Activated CD8-positive, alpha-beta T cell treated with anti-CD3 and anti-CD28 coated beads for 36 hours (primary cell): ENCODE measurements at regions of chr2 and their contacts with region 1.

Region 1: DNA sequence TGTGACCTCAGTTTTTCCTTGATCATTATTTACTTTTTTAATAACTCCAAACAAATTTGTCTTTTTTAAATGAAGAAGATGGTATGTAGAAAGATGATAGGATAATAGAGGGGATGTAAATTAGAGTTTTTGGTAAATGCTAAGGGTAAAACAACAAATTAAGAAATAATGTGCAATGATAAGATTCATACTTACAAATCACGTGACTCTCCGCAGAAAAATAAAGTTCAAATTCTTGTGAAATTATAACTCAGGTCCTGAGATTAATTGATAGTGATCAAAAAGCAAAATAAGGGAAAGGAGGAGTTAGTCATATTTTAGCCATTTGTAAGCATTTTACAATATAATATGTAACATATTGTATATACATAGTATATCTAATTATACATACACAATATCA is 304.1 kb upstream of the KCNH7 start:
- DNase-seq: no peak
- ATAC-seq: no peak
- H3K4me3 Mint-ChIP-seq: no peak overlapping the region
- H3K27ac Mint-ChIP-seq: no peak overlapping the region
- H3K4me1 Mint-ChIP-seq: no peaks in the 10 kb centered on the region
- H3K27me3 Mint-ChIP-seq: no peaks in the 10 kb centered on the region
- CTCF ChIP-seq: no peak

Region 2: DNA sequence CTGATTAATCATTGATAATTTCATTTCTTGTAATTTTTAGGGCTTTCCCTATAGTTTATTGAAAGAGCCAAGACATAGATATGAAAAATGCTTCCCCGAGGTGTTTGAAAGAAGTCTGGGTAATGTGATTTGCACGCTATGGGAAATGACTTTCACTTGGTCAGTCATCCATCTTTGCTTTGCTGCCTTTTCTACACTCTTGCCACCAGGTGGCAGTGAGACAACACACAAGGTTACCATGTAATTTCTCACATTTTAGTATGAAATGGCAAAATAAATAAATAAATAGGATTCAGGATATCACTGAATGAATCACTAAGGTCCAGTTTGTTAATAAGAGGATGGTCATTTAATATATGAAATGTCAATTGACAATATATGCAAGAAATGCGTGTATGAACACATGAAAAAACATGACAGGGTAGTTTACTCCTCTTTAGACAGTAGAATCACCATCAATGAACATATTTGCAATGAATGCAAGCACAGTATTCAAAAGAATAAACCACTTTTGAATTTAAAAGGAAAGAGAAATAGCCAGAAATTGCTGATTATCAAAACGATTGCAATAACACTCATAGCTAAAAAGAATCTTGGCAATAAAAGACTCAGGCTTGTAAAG is 251.8 kb before region 1 on chr2:
- CTCF ChIA-PET with region 1: no interaction called
- POLR2A ChIA-PET with region 1: no interaction called
- intact Hi-C with region 1: loop called (anchors 10 kb)
- DNase-seq: peak; percentile 21
- ATAC-seq: no peak
- H3K4me3 Mint-ChIP-seq: no peak overlapping the region
- H3K27ac Mint-ChIP-seq: no peak overlapping the region
- H3K4me1 Mint-ChIP-seq: no peaks in the 10 kb centered on the region
- H3K27me3 Mint-ChIP-seq: no peaks in the 10 kb centered on the region
- CTCF ChIP-seq: peak; percentile 68

Region 3: DNA sequence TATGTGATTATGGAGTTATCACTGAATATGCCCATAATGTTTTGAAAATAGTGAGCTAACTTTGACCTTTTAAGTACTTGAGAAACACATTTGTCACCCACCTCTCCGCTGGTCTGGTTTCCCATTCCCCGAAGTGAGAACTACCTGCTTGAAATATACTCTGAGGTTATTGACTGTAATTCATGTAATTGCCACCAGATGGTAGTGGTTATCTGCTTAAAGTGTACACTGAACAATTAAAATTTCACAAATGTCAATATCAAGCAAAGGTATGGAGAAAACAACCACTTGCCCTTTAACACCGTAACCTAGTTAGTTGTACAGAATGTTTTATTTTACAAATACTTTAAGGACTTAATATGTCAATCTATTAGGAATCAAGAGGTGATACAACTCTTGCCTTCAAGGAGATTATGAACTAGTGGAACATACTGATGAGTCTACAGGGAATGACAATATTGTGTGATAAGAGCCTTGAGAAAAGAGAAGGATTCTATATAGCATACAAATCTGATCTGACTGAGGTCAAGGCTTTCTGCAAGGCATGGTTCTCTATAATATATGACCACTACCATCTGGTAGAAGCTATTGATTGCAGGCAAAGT is 12.8 kb after region 1 on chr2:
- CTCF ChIA-PET with region 1: no interaction called
- POLR2A ChIA-PET with region 1: no interaction called
- intact Hi-C with region 1: no loop called
- DNase-seq: peak; percentile 1
- ATAC-seq: no peak
- H3K4me3 Mint-ChIP-seq: no peak overlapping the region
- H3K27ac Mint-ChIP-seq: no peak overlapping the region
- H3K4me1 Mint-ChIP-seq: no peaks in the 10 kb centered on the region
- H3K27me3 Mint-ChIP-seq: no peaks in the 10 kb centered on the region
- CTCF ChIP-seq: no peak